GM10248 (cell line): ENCODE measurements at regions of chr4 and their contacts with region 1.

Region 1: DNA sequence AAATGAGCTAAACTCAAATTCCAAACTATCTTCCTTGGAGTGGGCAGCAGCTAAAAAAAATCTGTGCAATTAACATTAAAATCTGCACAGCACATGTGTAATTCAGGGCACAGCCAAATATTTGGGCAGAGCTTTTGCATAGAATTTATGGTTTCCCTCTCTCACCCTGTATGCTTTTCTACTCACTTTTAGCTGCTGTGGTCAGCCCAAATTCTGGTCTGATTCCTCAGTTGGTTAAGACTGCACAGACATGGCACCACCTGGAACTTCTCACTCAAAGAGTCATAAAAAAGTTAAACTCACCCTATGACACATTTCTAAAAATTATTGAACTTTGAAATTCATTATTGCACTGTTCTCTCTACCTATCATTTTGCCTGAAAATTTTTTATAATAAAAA is 4.9 kb upstream of the PLK4 start:
- DNase-seq: no peak
- CTCF ChIP-seq: no peak

Region 2: DNA sequence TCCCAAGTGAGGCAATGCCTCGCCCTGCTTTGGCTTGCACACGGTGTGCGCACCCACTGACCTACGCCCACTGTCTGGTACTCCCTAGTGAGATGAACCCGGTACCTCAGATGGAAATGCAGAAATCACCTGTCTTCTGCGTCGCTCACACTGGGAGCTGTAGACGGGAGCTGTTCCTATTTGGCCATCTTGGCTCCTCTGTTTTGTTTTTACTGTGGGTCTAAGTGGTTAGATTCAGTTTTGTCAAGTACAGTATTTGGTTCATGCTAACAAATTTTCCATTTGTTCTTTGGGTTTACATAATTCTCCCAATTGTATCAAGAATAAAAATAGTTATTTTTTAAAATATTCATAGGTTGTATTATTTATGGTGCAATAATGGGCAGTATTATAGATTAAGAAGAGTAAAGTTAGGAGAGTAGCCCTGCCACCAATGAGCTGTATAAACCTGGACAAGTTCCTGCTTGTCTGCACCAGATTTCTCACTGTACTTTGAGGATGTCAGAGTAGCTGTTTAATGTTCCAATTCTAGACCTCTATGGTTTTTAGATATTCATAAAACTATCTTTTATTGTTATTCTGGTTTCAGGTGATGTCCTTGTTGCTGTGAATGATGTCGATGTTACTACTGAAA is 219.6 kb before region 1 on chr4:
- CTCF ChIA-PET with region 1: no interaction called
- POLR2A ChIA-PET with region 1: no interaction called
- DNase-seq: no peak
- CTCF ChIP-seq: no peak

Region 3: DNA sequence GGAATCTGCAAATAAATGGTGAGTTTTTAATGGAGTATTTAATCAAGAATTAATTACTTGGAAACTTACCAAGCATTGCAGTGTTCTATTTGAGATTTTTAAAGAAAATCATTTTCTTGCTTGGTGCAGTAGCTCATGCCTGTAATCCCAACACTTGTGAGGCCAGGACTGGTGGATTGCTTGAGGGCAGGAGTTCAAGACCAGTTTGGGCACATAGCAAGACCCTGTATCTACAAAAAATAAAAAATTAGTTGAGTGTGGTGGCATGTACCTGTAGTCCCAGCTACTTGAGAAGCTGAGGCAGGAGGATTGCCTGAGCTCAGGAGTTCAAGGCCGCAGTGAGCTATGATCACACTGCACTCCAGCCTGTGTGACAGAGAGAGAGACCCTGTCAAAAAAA is 11.7 kb after region 1 on chr4:
- CTCF ChIA-PET with region 1: interaction called, 12 read pairs
- POLR2A ChIA-PET with region 1: no interaction called
- DNase-seq: no peak
- CTCF ChIP-seq: no peak

Region 4: GRCh38 chr4:127985995-127986394 is 110.2 kb after region 1 on chr4:
- CTCF ChIA-PET with region 1: no interaction called
- POLR2A ChIA-PET with region 1: no interaction called
- DNase-seq: no peak
- CTCF ChIP-seq: no peak